ENCODE measurements at regions of chr17 and their contacts with region 1.

Region 1: DNA sequence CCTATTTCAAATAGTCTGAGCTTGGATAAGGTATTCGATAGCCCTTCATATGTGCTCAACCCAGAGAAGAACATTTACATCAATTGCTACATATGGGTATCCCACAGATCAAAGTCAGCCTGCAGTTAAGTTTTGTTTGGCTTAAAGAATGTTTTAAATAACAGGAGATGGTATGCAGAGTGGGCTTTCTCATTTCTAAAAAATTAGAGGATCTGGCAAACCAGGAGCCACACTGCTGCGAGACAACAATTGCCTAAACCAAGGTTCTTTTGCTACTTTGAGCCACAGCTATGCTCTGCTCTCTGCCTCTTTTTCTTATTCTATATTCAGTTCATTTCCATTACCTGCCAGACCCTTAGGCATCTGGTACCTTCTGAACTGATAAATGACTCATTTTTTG is 30.2 kb upstream of the ARHGAP44 start:
- DNase-seq: no peak
- H3K4me3 ChIP-seq: no peak overlapping the region
- H3K27ac ChIP-seq: no peak overlapping the region
- H3K4me1 ChIP-seq: no peaks in the 10 kb centered on the region
- H3K27me3 ChIP-seq: no peaks in the 10 kb centered on the region
- CTCF ChIP-seq: no peak
- POLR2A ChIP-seq: no peak

Region 2: GRCh38 chr17:10992106-10992880 is 1766.8 kb before region 1 on chr17:
- intact Hi-C with region 1: no loop called
- DNase-seq: no peak
- H3K4me3 ChIP-seq: no peak overlapping the region
- H3K27ac ChIP-seq: no peak overlapping the region
- H3K4me1 ChIP-seq: no peaks in the 10 kb centered on the region
- H3K27me3 ChIP-seq: peaks cover 0 to 3% of the 10 kb centered on the region in 2 donors
- CTCF ChIP-seq: no peak
- POLR2A ChIP-seq: no peak

Region 3: DNA sequence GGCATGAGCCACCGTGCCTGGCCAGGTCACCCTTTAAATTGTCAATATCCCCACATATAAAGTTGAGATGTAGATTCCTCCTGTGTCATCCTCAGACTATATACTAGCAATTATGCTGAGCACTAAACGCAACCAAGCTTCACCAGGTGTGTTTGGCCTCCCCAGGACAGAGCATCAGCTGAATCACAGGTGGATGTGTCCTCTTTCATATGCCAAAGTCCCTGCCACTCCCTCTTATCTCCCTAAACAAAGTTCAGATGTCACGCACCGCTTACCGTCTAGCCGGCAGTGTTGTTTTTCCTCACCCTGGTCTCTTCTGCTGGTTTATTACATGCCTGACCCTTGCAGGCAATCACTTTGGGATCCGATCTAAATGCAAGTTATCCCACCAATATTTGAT is 13.6 kb before region 1 on chr17:
- intact Hi-C with region 1: loop called (anchors 1 kb)
- DNase-seq: no peak
- H3K4me3 ChIP-seq: no peak overlapping the region
- H3K27ac ChIP-seq: no peak overlapping the region
- H3K4me1 ChIP-seq: no peaks in the 10 kb centered on the region
- H3K27me3 ChIP-seq: no peaks in the 10 kb centered on the region
- CTCF ChIP-seq: no peak
- POLR2A ChIP-seq: no peak

Region 4: DNA sequence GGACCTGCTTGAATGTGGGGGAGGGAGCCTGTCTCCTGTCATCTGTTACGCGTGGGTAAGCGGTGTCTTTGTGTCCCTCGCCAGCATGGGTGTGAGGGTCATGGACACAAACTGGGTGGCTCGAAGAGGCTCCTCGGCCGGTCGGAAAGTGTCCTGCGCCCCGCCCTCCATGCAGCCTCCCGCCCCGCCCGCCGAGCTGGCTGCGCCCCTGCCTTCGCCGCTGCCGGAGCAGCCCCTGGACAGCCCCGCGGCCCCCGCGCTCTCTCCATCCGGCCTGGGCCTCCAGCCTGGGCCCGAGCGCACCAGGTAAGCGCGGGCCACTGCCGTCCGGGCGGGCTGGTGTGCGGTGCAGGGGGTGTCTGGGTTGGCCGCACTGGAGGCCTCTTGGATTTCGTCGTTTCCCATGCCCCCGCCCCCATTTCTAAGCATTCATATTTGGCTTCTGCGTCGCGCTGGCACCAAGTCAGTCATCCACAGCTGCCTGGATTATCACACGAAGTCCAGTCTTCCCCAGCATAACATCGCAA is 215.0 kb after region 1 on chr17:
- intact Hi-C with region 1: no loop called
- DNase-seq: no peak
- H3K4me3 ChIP-seq: peak overlapping the region; percentile 22 to 66 (median 44)
- H3K27ac ChIP-seq: no peak overlapping the region
- H3K4me1 ChIP-seq: no peaks in the 10 kb centered on the region
- H3K27me3 ChIP-seq: no peaks in the 10 kb centered on the region
- CTCF ChIP-seq: no peak
- POLR2A ChIP-seq: no peak